ENCODE measurements at regions of chr5 and their contacts with region 1.

Region 1: DNA sequence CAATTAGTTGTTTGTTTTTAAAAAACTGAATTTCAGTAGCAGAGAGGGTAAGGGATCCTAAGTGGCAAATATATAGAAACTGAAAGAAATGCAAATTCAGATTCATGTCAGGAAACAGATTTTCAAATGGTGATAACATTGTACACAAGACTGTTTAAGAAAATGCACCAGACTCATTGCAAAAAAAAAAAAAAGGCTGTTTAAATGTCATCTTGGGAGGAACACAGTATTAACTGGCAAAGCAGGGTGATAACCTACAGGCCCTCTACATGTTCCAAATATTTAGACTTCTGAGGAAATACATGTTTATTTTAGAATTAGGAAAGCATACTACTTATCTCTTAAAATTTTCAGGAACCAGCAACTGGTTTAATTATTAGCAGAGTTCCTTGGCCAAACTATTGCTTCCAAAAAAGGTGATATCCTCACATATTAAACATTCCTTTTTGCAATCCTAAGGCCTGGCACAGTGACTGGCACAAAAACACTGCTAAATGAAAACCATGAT is 114.5 kb downstream of the TSSK1B start:
- DNase-seq: no peak
- H3K4me3 ChIP-seq: no peak overlapping the region
- H3K27ac ChIP-seq: no peak overlapping the region
- H3K4me1 ChIP-seq: no peaks in the 10 kb centered on the region
- H3K27me3 ChIP-seq: no peaks in the 10 kb centered on the region
- CTCF ChIP-seq: no peak
- EP300 ChIP-seq: no peak
- POLR2A ChIP-seq: no peak

Region 2: GRCh38 chr5:113005454-113005853 is 314.9 kb before region 1 on chr5:
- in situ Hi-C with region 1: loop called in 1 of 4 experiments (anchors 10 kb)
- intact Hi-C with region 1: no loop called
- DNase-seq: no peak
- H3K4me3 ChIP-seq: no peak overlapping the region
- H3K27ac ChIP-seq: no peak overlapping the region
- H3K4me1 ChIP-seq: no peaks in the 10 kb centered on the region
- H3K27me3 ChIP-seq: no peaks in the 10 kb centered on the region
- CTCF ChIP-seq: no peak
- EP300 ChIP-seq: no peak
- POLR2A ChIP-seq: no peak

Region 3: DNA sequence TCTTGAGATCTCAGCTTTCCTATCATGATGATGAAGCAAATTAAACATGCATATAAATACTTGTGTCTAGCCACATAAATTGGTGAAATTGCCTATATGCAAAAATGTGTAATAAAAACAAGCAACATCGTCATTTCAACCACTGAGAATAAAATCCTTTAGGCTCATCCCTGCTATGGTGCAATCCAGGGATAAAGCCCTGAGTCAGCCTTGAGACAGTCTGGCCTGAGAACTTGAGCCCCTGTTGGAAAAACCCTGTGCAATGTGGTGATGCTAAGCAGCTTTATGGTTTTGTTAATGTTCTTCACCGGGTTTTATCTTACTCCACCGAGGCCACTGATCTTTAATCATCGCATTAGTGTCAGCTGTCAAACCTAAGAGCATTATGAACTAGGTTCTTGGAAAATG is 173.2 kb before region 1 on chr5:
- in situ Hi-C with region 1: no loop called
- intact Hi-C with region 1: no loop called
- DNase-seq: no peak
- H3K4me3 ChIP-seq: no peak overlapping the region
- H3K27ac ChIP-seq: no peak overlapping the region
- H3K4me1 ChIP-seq: no peaks in the 10 kb centered on the region
- H3K27me3 ChIP-seq: no peaks in the 10 kb centered on the region
- CTCF ChIP-seq: no peak
- EP300 ChIP-seq: no peak
- POLR2A ChIP-seq: no peak